A673 (cell line): ENCODE measurements at regions of chr9 and their contacts with region 1.

Region 1: DNA sequence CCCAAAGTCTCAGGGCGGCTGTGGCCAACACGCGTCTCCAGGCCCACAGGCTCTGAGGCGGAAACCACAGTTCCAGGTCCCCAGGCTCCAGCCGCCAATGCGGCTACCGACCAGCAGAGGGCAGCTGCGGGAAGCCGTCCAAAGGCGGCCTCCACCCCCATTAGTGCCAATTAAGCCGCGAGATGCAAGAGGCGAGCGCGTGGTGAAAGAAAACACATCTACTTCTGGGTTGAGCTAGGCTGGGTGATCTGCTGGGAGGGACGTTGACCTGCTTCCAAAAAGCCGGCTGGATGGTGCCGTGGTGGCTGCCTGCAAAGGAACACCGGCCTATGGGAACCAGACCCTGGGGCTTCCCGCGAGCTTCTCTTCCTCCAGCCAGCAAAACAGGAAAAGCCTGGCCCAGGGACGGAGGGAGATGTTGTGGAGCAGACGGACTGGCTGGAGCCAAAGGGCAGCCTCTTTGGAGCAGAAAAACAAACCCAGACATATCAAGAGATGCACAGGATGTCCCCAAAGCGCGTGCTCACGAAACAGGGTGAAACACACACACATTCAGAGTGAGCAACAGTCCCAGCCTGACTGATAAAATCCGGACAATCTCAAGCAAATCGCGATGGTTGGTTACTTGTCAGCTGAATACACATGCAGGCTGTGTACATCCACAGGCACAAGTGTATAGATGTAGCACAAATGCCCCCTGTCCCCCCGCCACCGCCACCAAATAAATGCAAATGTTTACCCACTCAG is 187.1 kb upstream of the BRINP1 start:
- DNase-seq: peak; percentile 70
- H3K4me3 ChIP-seq: no peak overlapping the region
- H3K27ac ChIP-seq: no peak overlapping the region
- H3K4me1 ChIP-seq: no peaks in the 10 kb centered on the region
- H3K27me3 ChIP-seq: no peaks in the 10 kb centered on the region
- CTCF ChIP-seq: peak; percentile 96

Region 2: GRCh38 chr9:119500072-119500771 is 56.1 kb before region 1 on chr9:
- CTCF ChIA-PET with region 1: no interaction called
- POLR2A ChIA-PET with region 1: no interaction called
- intact Hi-C with region 1: no loop called
- DNase-seq: no peak
- H3K4me3 ChIP-seq: no peak overlapping the region
- H3K27ac ChIP-seq: no peak overlapping the region
- H3K4me1 ChIP-seq: no peaks in the 10 kb centered on the region
- H3K27me3 ChIP-seq: no peaks in the 10 kb centered on the region
- CTCF ChIP-seq: no peak

Region 3: DNA sequence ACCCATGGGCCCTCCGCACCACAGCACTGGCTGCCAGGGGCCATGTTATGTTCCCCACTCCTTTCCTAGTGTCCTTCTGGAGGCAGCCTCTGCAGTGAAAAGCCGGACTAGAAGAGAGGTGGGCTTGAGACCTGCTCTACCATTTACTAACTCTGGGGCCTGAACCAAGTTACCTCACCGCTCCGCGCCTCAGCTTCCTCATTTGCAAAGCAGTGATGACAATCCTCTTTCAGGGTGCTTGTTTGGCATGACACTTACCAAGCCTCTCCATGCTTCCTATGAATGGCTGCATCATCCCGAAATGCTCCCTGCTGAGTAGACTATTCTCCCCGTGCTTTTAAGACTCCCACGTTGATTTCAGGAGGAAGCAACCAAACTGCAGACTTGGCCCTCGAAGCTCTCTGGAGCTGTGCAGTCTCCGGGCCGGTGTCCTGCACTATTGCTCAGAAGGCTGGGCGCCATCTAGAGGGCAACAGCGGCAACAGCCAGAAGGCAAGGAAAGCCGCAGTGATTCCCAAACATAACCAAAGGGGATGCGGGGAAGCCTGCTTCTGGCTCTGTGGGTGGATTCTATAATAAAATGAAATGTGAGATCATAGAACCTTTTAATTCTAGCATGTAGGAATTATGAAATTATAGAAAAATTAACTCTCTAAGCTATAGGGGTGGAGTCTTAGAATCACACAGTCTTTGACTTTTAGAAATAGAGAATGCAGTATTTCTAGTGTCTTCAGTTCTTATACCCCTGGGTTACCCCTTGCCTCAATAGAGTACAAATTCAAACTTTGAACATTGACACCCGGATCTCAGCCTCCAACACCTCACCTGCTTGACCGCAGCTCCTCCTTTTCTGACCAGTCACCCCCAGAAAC is 412.8 kb after region 1 on chr9:
- CTCF ChIA-PET with region 1: no interaction called
- POLR2A ChIA-PET with region 1: no interaction called
- intact Hi-C with region 1: loop called (anchors 5 kb)
- DNase-seq: peak; percentile 76
- H3K4me3 ChIP-seq: no peak overlapping the region
- H3K27ac ChIP-seq: no peak overlapping the region
- H3K4me1 ChIP-seq: peaks cover 4% of the 10 kb centered on the region
- H3K27me3 ChIP-seq: no peaks in the 10 kb centered on the region
- CTCF ChIP-seq: peak; percentile 98

Region 4: DNA sequence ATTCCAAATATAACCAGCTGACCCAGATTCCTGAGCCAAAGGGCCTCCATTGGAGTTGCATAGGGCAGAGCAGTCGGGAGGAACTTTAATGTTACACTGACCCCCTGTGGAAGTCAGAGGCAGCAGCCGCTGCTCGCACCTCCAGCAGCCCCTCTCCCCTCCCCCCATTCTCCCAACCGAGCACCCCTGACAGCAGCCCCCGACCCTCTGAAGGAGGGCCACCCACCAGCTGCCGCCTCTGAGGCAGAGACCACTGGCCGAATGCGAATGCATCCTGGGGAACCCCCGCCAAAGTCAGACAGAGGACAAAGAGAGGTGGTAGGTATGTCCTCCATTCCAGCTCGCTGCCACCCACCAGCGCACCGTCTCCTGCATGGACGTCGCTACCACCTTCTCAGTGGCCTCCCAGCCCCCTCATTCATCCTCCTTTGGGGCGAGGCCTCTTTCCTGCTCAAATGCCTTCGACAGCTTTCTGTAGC is 792.7 kb after region 1 on chr9:
- CTCF ChIA-PET with region 1: no interaction called
- POLR2A ChIA-PET with region 1: no interaction called
- intact Hi-C with region 1: loop called (anchors 1 kb)
- DNase-seq: peak; percentile 55
- H3K4me3 ChIP-seq: no peak overlapping the region
- H3K27ac ChIP-seq: no peak overlapping the region
- H3K4me1 ChIP-seq: no peaks in the 10 kb centered on the region
- H3K27me3 ChIP-seq: no peaks in the 10 kb centered on the region
- CTCF ChIP-seq: peak; percentile 78